ENCODE measurements at regions of chr14 and their contacts with region 1.

Region 1: DNA sequence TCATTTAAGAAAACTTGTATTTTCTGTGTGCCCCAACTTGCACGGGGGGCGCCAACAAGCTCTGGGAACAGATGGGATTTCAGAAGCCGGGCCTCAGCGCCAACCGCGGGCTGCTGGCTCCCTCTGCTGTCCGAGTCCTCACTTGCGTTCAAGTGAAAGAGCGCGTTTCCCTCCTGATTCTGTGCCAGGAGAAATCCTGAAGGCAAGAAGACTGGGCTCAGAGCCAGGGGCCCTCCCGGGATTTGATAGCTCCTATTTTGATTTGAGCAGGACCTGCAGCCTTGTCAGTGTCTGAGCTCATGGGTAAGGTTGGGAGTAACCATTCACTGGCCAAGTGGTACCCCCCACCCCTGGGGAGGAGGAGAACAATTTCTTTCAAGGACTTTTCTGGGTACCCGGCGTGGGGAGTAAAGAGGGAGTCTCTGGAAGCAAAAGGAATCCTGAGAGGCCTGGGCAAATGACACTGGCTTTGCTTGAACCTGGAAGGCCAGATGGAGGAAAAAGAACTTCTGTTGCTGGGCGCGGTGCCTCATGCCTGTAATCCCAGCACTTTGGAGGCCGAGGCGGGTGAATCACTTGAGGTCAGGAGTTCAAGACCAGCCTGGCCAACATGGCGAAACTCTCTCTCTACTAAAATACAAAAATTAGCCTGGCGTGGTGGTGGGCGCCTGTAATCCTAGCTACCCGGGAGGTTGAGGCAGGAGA is 179.0 kb upstream of the RGS6 start:
- DNase-seq: peak; percentile 64 to 83
- ATAC-seq: peak; percentile 64 to 83 (median 72)
- H3K4me3 ChIP-seq: no peak overlapping the region
- H3K4me3 Mint-ChIP-seq: no peak overlapping the region
- H3K27ac ChIP-seq: no peak overlapping the region
- H3K27ac Mint-ChIP-seq: no peak overlapping the region
- H3K4me1 ChIP-seq: peaks cover 3% of the 10 kb centered on the region
- H3K4me1 Mint-ChIP-seq: peaks cover 0 to 4% of the 10 kb centered on the region in 2 donors
- H3K27me3 ChIP-seq: no peaks in the 10 kb centered on the region
- H3K27me3 Mint-ChIP-seq: peaks cover 0 to 2% of the 10 kb centered on the region in 2 donors
- CTCF ChIP-seq: peak; percentile 93

Region 2: GRCh38 chr14:71103662-71104484 is 649.4 kb before region 1 on chr14:
- intact Hi-C with region 1: loop called (anchors 1 kb)
- DNase-seq: peak in 1 of 2 donors; percentile 71
- ATAC-seq: peak; percentile 62 to 68 (median 63)
- H3K4me3 ChIP-seq: no peak overlapping the region
- H3K4me3 Mint-ChIP-seq: no peak overlapping the region
- H3K27ac ChIP-seq: no peak overlapping the region
- H3K27ac Mint-ChIP-seq: no peak overlapping the region
- H3K4me1 ChIP-seq: no peaks in the 10 kb centered on the region
- H3K4me1 Mint-ChIP-seq: peaks cover 9 to 15% of the 10 kb centered on the region in 2 donors
- H3K27me3 ChIP-seq: no peaks in the 10 kb centered on the region
- H3K27me3 Mint-ChIP-seq: no peaks in the 10 kb centered on the region
- CTCF ChIP-seq: peak; percentile 95

Region 3: GRCh38 chr14:71824816-71825215 is 71.5 kb after region 1 on chr14:
- intact Hi-C with region 1: no loop called
- DNase-seq: no peak
- ATAC-seq: no peak
- H3K4me3 ChIP-seq: no peak overlapping the region
- H3K4me3 Mint-ChIP-seq: no peak overlapping the region
- H3K27ac ChIP-seq: no peak overlapping the region
- H3K27ac Mint-ChIP-seq: no peak overlapping the region
- H3K4me1 ChIP-seq: no peaks in the 10 kb centered on the region
- H3K4me1 Mint-ChIP-seq: no peaks in the 10 kb centered on the region
- H3K27me3 ChIP-seq: no peaks in the 10 kb centered on the region
- H3K27me3 Mint-ChIP-seq: peaks cover 3 to 41% of the 10 kb centered on the region in 2 donors
- CTCF ChIP-seq: no peak

Measured in natural killer cell (primary cell).